Mucosa of descending colon (tissue), 3 donors: ENCODE measurements at regions of chr11 and their contacts with region 1.

Region 1: GRCh38 chr11:116086426-116086825 is 582.2 kb upstream of the CADM1 start:
- DNase-seq: peak in 1 of 3 donors; percentile 11
- ATAC-seq: peak; percentile 84
- H3K4me3 ChIP-seq: no peak overlapping the region
- H3K4me1 ChIP-seq: no peaks in the 10 kb centered on the region
- CTCF ChIP-seq: no peak

Region 2: DNA sequence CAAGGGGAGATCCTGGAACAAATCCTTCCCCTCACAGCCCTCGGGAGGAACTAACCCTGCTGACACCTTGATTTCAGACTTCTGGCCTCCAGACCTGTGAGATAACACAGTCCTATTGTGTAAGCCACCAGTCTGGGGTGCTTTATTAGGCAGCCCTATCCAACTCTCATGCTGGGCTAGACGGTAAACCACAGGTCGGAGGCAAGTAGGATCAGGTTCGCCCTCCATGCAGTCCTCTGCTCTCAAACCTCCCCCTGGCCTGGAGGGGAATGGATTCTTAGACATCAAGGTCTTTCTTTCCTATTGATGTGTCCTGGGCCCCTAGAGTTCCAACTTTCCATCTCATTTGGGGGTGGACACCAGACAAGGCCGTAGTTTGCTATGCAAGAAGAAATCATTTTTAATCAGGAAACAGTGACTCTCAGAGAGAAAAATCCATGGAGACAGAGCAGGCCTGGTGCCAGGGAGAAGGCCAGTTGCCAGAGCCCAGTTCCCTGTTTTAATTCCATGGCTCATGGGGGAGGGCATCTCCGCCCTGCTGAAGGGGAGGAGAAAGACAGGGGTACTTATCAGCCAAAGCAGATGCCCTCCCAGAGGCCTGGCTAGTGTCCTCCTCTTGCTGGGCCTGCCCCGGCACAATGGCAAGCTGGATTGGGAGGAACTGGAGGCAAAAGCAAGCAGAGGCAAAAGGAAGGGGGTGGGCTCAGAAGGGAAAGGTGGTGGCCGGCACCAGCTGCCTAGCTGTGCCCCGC is 94.2 kb after region 1 on chr11:
- intact Hi-C with region 1: loop called in 1 of 2 experiments (anchors 5 kb)
- DNase-seq: no peak
- ATAC-seq: no peak
- H3K4me3 ChIP-seq: no peak overlapping the region
- H3K4me1 ChIP-seq: no peaks in the 10 kb centered on the region
- CTCF ChIP-seq: no peak